IMR-90 (cell line): ENCODE measurements at regions of chr19 and their contacts with region 1.

Region 1: DNA sequence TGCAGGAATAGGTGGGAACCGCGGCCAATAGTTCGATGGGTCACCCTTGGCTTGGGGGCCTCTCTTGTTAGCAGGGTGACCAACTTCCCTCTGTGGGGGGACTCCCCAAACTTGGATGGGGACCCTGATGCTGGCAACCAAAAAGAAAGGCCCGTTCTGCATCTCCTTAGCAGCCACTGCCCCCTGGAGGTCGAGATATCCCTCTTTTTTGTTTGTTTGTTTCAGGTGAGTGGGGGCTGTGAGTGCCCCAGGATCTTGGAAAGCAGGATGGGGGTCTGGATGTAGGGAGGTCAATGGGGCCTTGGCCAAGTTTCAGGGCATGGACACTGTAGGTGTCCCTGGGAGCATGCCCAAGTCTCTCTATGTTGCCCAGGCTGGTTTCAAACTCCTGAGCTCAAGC is 7.7 kb upstream of the CRTC1 start:
- DNase-seq: no peak
- ATAC-seq: no peak
- H3K4me3 ChIP-seq: no peak overlapping the region
- H3K27ac ChIP-seq: no peak overlapping the region
- H3K4me1 ChIP-seq: peaks cover 15% of the 10 kb centered on the region
- H3K27me3 ChIP-seq: no peaks in the 10 kb centered on the region
- CTCF ChIP-seq: peak; percentile 52
- POLR2A ChIP-seq: no peak
- RAD21 ChIP-seq: peak; percentile 61

Region 2: DNA sequence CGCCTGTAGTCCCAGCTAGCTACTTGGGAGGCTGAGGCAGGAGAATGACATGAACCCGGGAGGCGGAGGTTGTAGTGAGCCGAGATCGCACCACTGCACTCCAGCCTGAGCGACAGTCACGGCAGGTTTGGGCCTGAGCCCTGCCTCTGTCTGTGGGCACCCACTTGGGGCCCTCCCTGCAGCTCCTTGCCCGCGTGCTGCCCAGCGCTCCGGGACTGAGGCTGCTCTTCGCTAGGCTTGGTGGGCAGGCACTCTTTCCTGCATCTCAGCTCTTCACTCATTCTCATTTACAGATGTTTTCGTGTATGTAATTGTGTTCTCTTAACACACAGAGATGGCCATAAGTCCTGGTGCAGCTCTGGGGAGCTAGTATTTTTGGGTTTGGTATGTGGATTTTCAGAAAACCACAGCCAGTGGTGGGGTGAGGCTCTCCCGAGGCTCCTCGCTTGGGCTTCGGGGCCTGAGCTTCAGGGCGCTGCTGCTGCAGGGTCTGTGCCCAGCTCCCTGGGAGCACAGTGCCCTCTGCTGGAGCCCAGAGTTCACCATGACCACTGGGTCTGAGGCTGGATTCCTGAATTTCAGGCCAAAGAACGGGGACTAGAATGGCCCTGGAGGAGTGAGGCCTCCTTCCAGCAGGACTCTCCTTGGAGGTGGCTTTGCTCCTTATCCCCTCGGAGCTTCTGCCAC is 171.2 kb after region 1 on chr19:
- CTCF ChIA-PET with region 1: interaction called, 8 read pairs
- POLR2A ChIA-PET with region 1: no interaction called
- dilution Hi-C with region 1: no loop called
- in situ Hi-C with region 1: no loop called
- intact Hi-C with region 1: loop called (anchors 10 kb)
- DNase-seq: peak; percentile 69
- ATAC-seq: peak; percentile 93
- H3K4me3 ChIP-seq: no peak overlapping the region
- H3K27ac ChIP-seq: no peak overlapping the region
- H3K4me1 ChIP-seq: peaks cover 21% of the 10 kb centered on the region
- H3K27me3 ChIP-seq: no peaks in the 10 kb centered on the region
- CTCF ChIP-seq: peak; percentile 92
- POLR2A ChIP-seq: no peak
- RAD21 ChIP-seq: peak; percentile 96